ENCODE measurements at regions of chr6 and their contacts with region 1.

Region 1: DNA sequence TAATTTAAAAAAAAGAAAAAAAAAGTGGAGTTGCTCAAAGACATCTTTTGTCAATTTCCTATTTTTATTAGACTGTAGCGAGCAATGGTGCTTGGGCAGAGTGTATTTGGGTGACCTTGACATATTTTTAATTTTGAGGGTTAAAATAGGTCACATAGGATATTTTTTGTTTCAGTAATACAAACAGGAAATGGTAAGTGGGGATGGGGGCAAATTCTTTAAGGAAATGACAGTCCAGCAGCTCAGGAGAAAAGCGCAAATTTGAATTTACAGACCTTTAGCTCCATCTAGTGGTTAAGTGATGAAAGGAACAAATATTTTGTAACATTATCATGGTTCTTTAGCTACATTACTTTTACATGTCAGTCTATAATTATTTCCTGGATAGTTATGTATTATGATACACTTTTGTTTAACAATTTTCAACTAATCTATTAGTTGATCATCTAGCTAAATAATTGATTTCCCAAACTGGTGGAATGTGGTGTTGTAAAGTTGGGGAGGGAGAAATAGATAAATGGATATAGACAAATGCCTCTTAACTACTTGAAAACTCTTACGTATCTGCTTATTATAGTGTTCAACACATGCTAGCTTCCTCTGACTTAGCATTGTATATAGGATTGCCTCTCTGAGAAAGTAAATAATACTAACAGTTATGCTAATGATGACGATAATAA is 10.0 kb downstream of the CITED2 start:
- DNase-seq: no peak
- H3K4me3 Mint-ChIP-seq: no peak overlapping the region
- H3K27ac Mint-ChIP-seq: no peak overlapping the region
- H3K4me1 Mint-ChIP-seq: peaks cover 47% of the 10 kb centered on the region
- H3K27me3 Mint-ChIP-seq: peaks cover 4% of the 10 kb centered on the region

Region 2: DNA sequence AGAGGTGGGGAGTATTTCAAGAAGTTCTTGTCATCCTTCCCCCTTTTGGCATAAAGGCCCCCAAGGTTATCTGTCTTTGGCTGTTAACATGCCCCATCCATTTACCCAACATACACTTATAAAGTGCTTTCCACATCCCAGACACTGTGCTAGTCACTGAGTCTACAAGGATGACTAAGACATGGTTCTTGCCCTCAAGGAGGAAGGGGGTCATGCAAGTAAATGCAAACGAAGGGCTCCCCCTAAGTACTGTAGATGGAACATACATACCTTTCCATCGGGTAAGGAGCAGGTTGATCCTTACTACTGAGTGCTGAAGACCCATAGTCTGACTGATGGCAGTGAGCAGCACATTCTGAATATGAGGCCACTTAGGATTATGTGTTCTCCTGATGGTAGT is 191.3 kb before region 1 on chr6:
- intact Hi-C with region 1: loop called (anchors 5 kb)
- DNase-seq: no peak
- H3K4me3 Mint-ChIP-seq: no peak overlapping the region
- H3K27ac Mint-ChIP-seq: peak overlapping the region; percentile 82
- H3K4me1 Mint-ChIP-seq: peaks cover 82% of the 10 kb centered on the region
- H3K27me3 Mint-ChIP-seq: no peaks in the 10 kb centered on the region

Region 3: DNA sequence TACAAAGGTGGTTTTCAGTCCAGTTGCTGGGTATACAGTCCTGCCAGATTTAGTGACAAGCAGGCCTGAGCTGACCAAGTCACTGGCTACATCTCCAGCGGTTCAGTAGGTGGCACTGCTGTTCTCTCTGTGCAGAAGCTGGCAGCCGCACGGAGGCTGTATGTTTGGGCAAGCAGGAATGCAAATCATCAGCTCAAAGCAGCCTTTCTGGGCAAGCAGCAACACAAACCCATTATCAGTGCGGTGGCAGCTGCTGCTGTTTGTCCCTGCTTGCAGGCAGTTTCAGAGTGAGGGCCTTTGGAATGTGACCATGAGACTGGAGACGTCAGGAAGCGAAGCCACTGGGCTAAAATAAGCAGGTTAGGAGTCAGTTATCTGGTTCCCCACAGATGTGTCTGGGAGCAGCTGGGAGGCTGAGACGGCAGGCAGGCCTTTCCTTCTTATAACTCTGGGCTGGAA is 145.1 kb before region 1 on chr6:
- intact Hi-C with region 1: loop called (anchors 1 kb)
- DNase-seq: peak; percentile 62
- H3K4me3 Mint-ChIP-seq: peak overlapping the region; percentile 38
- H3K27ac Mint-ChIP-seq: peak overlapping the region; percentile 61
- H3K4me1 Mint-ChIP-seq: peaks cover 10% of the 10 kb centered on the region
- H3K27me3 Mint-ChIP-seq: no peaks in the 10 kb centered on the region

Measured in activated T-helper 1 cell treated with anti-CD3 and anti-CD28 coated beads, Interleukin-12 subunit alpha, Interleukin-12 subunit beta, Interleukin-2, Interleukin-4 antibody, amounts not matched to agents 30 ng/mL and 10 ng/mL and 1 ng/mL, durations not matched to agents 14 hours and 24 hours and 36 hours (primary cell).